Psoas muscle (tissue), 8 donors: ENCODE measurements at regions of chr3 and their contacts with region 1.

Region 1: GRCh38 chr3:96657710-96658109 is 156.7 kb upstream of the EPHA6 start:
- DNase-seq: no peak
- ATAC-seq: no peak
- H3K4me3 ChIP-seq: no peak overlapping the region
- H3K27ac ChIP-seq: no peak overlapping the region
- H3K4me1 ChIP-seq: no peaks in the 10 kb centered on the region
- H3K27me3 ChIP-seq: no peaks in the 10 kb centered on the region
- CTCF ChIP-seq: no peak

Region 2: DNA sequence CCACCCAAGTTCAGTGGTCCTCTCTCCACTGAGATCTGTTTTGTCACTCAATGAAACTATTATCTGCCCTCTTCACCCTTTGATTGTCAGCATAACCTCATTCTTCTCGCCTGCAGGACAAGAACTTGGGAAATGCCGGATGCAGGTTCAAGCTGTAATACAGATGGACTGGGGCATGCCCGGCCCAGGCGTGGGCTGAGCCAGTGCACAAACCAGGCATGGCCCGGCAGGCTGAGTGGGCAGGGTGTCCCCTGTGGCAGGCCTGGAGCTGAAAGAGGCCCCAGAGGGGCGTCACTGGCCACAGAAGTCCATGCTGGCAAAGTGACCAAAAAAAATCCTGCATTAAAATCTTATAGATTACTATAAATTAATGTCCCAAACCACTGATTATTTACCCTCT is 482.2 kb before region 1 on chr3:
- intact Hi-C with region 1: loop called in 1 of 2 experiments (anchors 10 kb)
- DNase-seq: no peak
- ATAC-seq: no peak
- H3K4me3 ChIP-seq: no peak overlapping the region
- H3K27ac ChIP-seq: no peak overlapping the region
- H3K4me1 ChIP-seq: no peaks in the 10 kb centered on the region
- H3K27me3 ChIP-seq: no peaks in the 10 kb centered on the region
- CTCF ChIP-seq: no peak

Region 3: DNA sequence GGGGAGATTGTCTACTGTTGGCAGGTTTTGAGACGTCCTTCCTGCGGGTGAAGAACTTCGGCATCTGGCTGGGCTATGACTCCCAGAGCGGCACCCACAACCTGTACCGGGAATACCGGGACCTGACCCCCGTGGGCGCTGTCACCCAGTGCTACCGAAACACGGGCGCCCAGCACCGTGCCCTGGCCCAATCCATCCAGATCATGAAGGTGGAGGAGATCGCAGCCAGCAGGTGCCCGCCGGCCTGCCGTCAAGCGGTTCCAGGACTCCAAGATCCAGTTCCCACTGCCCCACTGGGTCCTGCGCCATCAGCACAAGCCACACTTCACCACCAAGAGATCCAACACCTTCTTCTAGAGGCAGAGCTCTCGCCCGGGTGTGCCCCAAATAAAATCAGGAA is 38.2 kb before region 1 on chr3:
- intact Hi-C with region 1: no loop called
- DNase-seq: peak in 1 of 2 donors; percentile 26
- ATAC-seq: no peak
- H3K4me3 ChIP-seq: no peak overlapping the region
- H3K27ac ChIP-seq: no peak overlapping the region
- H3K4me1 ChIP-seq: no peaks in the 10 kb centered on the region
- H3K27me3 ChIP-seq: no peaks in the 10 kb centered on the region
- CTCF ChIP-seq: no peak

Region 4: GRCh38 chr3:96843505-96844203 is 185.9 kb after region 1 on chr3:
- intact Hi-C with region 1: no loop called
- DNase-seq: no peak
- ATAC-seq: no peak
- H3K4me3 ChIP-seq: no peak overlapping the region
- H3K27ac ChIP-seq: no peak overlapping the region
- H3K4me1 ChIP-seq: no peaks in the 10 kb centered on the region
- H3K27me3 ChIP-seq: peaks cover 0 to 2% (median 0%) of the 10 kb centered on the region in 3 donors
- CTCF ChIP-seq: no peak